ENCODE measurements at regions of chr16 and their contacts with region 1.

Region 1: DNA sequence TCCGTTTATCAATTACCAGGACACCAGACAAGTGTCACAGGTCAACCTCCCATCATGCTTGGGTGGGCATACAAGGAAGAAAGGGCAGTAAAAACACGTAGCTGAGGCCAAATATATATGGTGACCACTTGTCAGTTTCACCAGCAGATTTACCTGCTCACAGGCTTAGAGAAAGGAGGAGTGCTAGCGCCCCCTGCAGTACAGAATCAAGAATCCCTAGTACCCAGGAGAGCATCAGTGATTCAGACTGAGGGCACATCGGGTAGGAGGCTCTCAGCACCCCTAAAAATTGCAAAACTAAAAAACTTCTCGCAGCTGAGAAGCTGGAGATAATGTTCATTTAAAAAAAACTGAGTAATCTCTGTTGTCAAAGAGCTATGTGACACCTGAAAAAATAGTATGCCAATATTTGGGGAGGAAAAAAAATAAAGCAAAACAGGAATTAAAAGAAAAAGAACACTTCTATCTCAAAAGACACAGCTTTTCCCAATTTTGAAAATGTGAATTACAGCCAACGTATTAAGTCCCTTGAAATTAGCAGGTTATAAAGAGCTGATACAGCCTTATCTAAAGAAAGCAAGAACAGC is 21.2 kb upstream of the MON1B start:
- DNase-seq: peak; percentile 22

Region 2: DNA sequence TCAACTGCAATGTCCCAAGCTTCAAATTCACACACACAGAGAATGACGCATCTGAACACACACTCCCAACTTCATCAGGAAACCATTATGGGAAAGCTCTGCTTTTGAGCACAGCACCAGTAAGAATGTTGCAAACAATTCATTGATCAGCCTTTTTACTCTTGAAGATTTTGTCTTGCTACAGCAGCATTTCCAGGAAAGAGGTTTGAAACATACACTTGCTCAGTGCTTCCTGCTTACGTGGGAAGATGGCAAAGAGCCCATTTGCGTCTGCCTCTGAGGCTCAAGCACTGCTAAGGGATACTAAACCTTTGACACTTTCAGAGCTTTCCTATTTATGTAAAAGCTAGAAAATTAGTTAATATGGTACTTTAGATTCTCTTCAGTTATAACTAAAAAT is 55.9 kb before region 1 on chr16:
- in situ Hi-C with region 1: loop called (anchors 5 kb)
- DNase-seq: no peak

Region 3: GRCh38 chr16:77262971-77263370 is 93.2 kb after region 1 on chr16:
- in situ Hi-C with region 1: no loop called
- DNase-seq: no peak